GM10248 (cell line): ENCODE measurements at regions of chr9 and their contacts with region 1.

Region 1: GRCh38 chr9:114405294-114406034 is 17.7 kb upstream of the AKNA start:
- DNase-seq: peak; percentile 88
- CTCF ChIP-seq: peak; percentile 82

Region 2: GRCh38 chr9:114420581-114420980 is 15.1 kb after region 1 on chr9:
- CTCF ChIA-PET with region 1: interaction called, 53 read pairs
- POLR2A ChIA-PET with region 1: no interaction called
- DNase-seq: no peak
- CTCF ChIP-seq: no peak

Region 3: GRCh38 chr9:114434878-114435311 is 29.4 kb after region 1 on chr9:
- CTCF ChIA-PET with region 1: interaction called, 29 read pairs
- POLR2A ChIA-PET with region 1: no interaction called
- DNase-seq: peak; percentile 62
- CTCF ChIP-seq: peak; percentile 63

Region 4: DNA sequence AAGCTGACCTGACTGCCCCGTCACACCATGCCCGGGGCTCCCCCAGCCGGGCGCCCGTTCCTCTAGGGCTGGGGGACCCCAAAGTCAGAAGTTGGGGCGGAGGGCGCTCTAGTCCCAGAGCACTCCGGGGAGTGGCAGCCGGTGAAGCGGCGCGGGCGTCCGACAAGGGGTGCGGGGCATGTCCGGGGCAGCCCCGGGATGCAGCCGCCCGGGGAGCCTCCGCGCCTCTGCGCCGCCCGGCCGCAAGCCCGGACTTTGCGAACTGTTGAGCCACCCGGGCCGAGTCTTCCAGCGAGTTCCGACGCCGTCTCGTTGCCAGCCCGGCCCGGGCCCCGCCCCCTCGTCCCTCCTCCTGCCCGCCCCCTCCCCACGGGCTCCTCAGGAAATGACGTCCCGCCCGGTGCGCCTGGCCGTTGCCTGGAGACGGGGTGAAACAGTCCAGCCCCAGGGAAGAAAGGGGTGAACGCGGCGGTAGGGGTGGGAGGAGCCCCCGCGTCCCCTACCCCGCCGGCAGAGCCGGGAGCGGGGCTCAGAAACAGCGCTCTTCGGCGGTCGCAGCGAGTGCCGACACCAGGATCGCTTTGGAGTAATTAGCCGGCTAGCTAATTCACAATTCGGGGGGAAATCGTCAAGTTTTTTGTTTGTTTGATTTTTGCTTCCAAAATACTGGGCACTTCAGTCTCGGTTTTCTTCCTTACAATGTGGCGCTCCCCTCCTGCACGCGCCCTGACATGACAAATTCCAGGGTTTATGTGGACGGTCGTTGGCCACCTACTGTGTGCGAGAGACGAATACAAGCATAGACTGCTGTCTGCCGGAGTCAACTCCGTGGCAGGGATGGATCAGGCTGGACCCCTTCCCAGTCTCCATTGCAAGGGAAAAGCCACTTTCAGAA is 100.0 kb after region 1 on chr9 and contains the start of gene WHRN:
- CTCF ChIA-PET with region 1: interaction called, 36 read pairs
- POLR2A ChIA-PET with region 1: no interaction called
- DNase-seq: peak; percentile 92
- CTCF ChIP-seq: no peak

Region 5: GRCh38 chr9:114558027-114558662 is 152.7 kb after region 1 on chr9:
- CTCF ChIA-PET with region 1: no interaction called
- POLR2A ChIA-PET with region 1: no interaction called
- DNase-seq: no peak
- CTCF ChIP-seq: no peak

Region 6: GRCh38 chr9:114662081-114662989 is 256.9 kb after region 1 on chr9:
- CTCF ChIA-PET with region 1: interaction called, 13 read pairs
- POLR2A ChIA-PET with region 1: no interaction called
- DNase-seq: peak; percentile 79
- CTCF ChIP-seq: peak; percentile 78